ENCODE measurements at regions of chr4 and their contacts with region 1.

Region 1: GRCh38 chr4:187849556-187850225 is 145.9 kb upstream of the ZFP42 start:
- DNase-seq: no peak
- ATAC-seq: no peak
- H3K4me3 ChIP-seq: no peak overlapping the region
- H3K27ac ChIP-seq: no peak overlapping the region
- H3K4me1 ChIP-seq: no peaks in the 10 kb centered on the region
- H3K27me3 ChIP-seq: no peaks in the 10 kb centered on the region
- CTCF ChIP-seq: no peak
- POLR2A ChIP-seq: no peak
- RAD21 ChIP-seq: no peak

Region 2: DNA sequence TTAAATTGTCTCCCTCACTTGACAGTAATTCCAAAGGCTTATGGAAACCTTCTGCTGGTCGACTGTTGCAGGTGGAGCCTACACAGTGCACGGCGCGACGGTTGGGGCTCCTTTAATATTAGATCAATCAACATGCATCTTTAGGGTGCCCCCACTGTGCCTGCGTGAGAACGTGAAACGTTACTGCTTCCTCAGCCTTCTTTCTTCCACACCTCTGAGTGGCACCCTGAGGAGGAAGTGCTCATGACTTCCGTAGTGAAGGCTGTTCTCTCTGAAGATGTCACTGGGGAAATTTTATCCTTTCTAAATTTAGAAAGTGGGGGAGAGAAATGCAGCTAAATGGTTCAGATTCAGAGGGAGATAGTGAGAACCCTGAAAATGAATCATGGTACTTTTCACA is 38.1 kb before region 1 on chr4:
- CTCF ChIA-PET with region 1: no interaction called
- POLR2A ChIA-PET with region 1: no interaction called
- RAD21 ChIA-PET with region 1: no interaction called
- intact Hi-C with region 1: no loop called
- DNase-seq: no peak
- ATAC-seq: no peak
- H3K4me3 ChIP-seq: no peak overlapping the region
- H3K27ac ChIP-seq: no peak overlapping the region
- H3K4me1 ChIP-seq: no peaks in the 10 kb centered on the region
- H3K27me3 ChIP-seq: no peaks in the 10 kb centered on the region
- CTCF ChIP-seq: no peak
- POLR2A ChIP-seq: no peak
- RAD21 ChIP-seq: no peak

Region 3: GRCh38 chr4:189299706-189300105 is 1450.0 kb after region 1 on chr4:
- CTCF ChIA-PET with region 1: no interaction called
- POLR2A ChIA-PET with region 1: no interaction called
- RAD21 ChIA-PET with region 1: no interaction called
- intact Hi-C with region 1: loop called (anchors 10 kb)
- DNase-seq: no peak
- ATAC-seq: no peak
- H3K4me3 ChIP-seq: no peak overlapping the region
- H3K27ac ChIP-seq: no peak overlapping the region
- H3K4me1 ChIP-seq: no peaks in the 10 kb centered on the region
- H3K27me3 ChIP-seq: no peaks in the 10 kb centered on the region
- CTCF ChIP-seq: no peak
- POLR2A ChIP-seq: no peak
- RAD21 ChIP-seq: no peak